Transverse colon (tissue), 4 donors: ENCODE measurements at regions of chr4 and their contacts with region 1.

Region 1: DNA sequence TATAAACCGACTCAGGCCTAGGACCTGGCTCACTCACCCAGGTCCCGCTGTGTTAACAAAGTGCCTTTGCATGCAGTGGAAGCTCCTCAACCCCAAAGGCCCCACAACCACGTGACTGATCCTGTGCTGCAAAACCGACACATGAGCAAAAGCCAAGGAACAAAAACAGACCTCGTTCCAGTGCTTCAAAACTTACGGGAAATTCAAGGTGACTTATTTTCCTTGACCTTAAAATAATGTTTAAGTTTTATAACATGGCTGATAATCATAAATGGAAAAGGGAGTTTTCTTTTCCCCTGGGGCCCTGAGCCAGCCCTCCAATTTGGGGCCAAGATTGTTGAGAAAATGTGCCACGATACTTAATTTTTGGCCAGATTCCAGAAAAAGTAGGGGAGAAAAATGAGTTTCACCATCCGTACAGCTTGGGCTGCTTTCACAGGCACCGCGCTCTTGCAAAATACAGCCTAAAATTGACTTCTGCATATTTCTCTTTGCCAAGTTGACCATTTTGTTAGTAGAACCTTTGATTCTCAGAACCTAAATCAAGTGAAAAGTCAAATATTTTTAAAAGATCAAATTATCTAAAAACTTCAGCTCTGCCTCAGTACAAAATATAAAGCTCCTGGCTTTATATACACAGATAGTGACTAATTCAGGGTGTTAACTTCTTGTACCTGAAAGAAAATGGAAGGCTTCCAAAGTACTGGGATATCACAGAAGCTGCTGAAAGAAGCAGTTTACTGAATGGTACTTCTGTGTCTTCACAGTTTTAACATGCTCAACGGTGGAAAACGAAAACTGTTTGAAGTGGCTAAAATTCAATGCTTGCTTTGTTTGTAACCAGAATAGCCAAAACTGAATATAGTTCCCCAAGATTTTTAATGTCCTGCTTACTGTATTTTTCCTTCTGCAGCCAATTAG is 93.8 kb downstream of the APBB2 start:
- DNase-seq: peak; percentile 45
- H3K4me3 ChIP-seq: no peak overlapping the region
- H3K27ac ChIP-seq: peak overlapping the region; percentile 35 to 70 (median 50)
- H3K4me1 ChIP-seq: peaks cover 4 to 48% (median 21%) of the 10 kb centered on the region in 4 donors
- H3K27me3 ChIP-seq: no peaks in the 10 kb centered on the region
- CTCF ChIP-seq: no peak
- EP300 ChIP-seq: no peak
- POLR2A ChIP-seq: no peak

Region 2: DNA sequence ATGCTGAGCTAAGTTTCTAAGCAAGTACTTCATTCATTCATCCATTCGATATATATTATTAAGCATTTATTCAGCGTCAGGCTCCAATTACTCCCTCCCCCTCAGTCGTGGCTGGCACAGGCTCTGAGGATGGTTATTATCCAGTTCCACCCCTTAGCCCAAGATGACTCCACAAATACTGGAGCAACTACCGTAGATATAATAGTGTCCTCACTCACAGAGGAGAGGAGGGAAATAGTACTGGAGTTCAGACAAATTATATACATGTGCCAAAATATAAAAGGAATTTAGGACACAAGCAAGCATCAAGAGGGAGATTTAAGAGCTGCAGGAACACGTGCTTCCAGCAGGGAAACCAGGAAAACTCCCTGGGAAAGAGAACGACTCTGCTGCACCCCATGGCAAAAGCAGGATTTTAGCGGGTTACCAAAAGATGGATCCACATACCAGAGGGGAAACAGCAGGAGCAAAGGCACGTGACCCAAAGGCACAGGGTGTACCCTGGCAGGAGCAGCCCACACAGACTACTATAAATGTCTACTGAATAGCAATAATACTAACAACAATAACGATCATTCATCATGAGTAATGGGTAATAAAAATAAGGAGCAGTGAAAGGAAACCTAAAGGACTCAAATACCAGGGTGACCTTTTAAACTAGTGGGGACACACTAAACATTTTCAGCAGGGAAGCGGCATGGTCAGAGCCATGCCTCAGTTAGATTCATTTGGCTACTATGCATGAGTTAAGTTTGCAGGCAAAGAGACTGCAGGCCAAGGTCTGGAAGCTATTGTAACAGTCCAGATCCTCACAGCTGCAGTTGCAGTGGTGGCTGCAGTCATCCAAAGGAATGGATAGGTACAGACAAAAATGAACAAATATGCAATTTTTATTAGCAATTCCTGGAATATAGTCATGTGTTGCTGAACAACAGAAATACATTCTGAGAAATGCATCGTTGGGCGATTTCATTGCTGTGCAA is 59.9 kb before region 1 on chr4:
- in situ Hi-C with region 1: no loop called
- intact Hi-C with region 1: loop called (anchors 10 kb)
- DNase-seq: peak; percentile 24
- H3K4me3 ChIP-seq: no peak overlapping the region
- H3K27ac ChIP-seq: peak overlapping the region; percentile 46 to 76 (median 57)
- H3K4me1 ChIP-seq: peaks cover 0 to 17% (median 9%) of the 10 kb centered on the region in 4 donors
- H3K27me3 ChIP-seq: no peaks in the 10 kb centered on the region
- CTCF ChIP-seq: no peak
- EP300 ChIP-seq: peak; percentile 86
- POLR2A ChIP-seq: no peak